ENCODE measurements at regions of chr17 and their contacts with region 1.

Region 1: DNA sequence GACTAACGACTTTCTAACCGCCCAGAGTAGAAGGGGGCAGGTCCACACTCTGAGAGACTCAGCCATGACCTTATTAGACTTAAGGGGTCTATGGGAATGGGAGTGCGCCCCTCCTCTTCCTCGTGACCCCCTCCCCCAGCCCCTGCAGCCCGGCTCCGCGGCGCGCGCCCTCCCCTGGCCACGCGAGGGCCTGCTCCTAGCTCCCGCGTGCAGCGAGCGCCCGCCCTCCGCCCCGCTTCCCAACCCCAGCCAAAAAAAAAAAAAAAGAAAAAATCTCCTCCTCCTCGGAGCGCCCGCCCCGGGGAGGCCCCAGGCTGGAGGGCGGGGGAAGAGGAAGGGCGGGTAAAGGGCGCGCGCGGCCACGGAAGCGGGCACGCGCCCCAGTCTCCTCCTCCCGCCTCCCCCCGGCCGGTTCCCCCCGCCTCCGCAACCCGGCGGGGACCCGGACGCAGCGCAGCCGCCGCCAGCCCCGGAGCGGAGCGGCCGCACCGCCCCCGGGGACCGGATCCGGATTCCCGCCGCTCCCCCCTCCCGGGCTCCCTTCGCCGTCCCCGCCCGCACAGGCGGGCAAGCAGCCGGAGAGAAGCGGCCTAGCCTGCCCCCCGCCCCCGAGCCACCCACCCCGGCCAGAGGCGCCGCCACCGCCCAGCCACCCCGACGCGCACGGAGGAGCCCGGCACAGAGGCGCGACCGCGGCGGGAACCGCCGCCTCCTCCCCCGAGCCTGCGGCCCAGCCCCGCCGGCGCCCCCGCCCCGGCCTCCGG is 949 bp downstream of the UBTF start:
- DNase-seq: peak; percentile 95
- H3K4me3 ChIP-seq: peak overlapping the region; percentile 70 to 91
- H3K27ac ChIP-seq: peak overlapping the region; percentile 84 to 97
- H3K4me1 ChIP-seq: peaks cover 20 to 25% of the 10 kb centered on the region in 2 experiments
- H3K27me3 ChIP-seq: no peaks in the 10 kb centered on the region
- CTCF ChIP-seq: peak; percentile 75
- EP300 ChIP-seq: no peak; a peak in 1 of 4 replicates
- RAD21 ChIP-seq: peak; percentile 44

Region 2: DNA sequence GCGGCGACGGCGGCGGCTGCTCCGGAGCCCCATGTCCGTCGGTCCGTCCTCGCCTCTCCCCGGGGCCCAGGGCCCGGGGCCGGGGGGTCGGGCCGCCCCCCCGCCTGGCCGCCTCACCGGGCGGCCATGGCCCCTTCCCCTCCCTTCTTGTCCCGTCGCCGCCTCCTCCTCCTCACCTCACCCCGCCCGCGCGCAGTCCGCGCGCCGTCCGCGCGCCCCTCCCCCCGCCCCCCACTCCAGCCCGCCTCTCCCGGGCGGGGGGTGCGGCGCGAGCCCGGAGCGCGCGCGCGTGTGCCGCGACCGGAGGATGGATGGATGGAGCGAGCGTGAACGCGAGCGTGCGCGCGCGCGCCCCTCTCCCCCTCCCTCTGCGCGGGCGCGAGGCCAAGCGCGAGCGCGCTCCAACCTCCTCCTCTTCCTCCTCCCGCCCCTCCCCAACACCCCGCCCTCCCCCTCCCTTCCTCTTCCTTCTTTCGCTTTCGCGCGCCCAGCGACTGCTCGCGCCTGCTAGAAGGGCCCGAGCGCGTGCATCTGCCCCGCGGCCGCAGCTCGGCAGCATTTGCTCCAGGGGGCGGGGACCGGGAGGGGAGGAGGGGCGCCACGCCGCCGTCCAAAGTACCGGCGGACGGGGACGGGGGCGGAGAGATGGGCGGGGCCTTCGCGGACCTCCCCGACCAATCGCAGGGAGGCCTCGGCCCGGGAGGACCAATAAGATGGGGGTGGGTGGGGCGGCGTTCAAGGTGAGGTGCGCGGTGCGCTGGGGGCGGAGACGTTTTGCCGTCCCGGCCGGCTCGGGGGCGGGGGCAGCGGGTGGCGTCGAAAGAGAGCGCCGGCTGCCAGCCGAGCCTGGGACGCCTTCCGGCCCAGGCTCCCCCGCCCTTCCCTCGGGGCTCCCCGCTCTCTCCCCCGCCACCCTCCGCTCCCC is 18.7 kb before region 1 on chr17 and contains the start of gene ATXN7L3:
- CTCF ChIA-PET with region 1: interaction called, 61 read pairs
- POLR2A ChIA-PET with region 1: interaction called, 9 read pairs
- DNase-seq: peak; percentile 99
- H3K4me3 ChIP-seq: peak within 1 kb of the TSS; percentile 79 to 83
- H3K27ac ChIP-seq: peak within 1 kb of the TSS; percentile 85 to 96
- H3K4me1 ChIP-seq: peaks cover 16 to 30% of the 10 kb centered on the region in 2 experiments
- H3K27me3 ChIP-seq: no peaks in the 10 kb centered on the region
- CTCF ChIP-seq: no peak
- EP300 ChIP-seq: no peak
- RAD21 ChIP-seq: no peak
- polyA plus RNA-seq, gene ATXN7L3: 47.7 and 57.9 TPM in 2 replicates

Region 3: DNA sequence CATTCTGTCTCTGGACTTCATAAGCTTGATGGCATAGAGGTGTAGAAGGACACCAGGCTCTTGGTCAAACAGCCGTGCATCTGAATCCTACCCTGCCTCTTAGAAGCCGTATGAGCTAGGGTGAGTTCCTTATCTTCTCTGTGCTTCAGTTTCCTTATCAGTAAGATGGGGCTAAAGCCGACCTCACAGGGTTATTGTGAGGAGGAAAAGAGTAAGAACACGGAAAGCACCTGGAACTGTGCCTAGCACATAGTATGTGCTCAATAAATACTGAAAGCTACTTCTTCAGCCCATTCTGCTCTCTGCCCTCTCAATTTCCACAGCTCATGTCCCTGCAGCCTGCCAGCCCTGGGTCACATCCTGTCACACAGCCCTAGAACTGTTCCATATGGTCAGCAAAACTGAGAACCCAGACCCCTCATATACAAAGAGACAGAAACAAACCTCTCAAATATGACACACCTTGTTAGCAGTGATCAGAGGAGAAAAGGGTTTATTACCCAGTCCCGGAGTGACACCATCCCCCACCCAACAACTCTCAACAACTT is 18.0 kb after region 1 on chr17:
- CTCF ChIA-PET with region 1: no interaction called
- POLR2A ChIA-PET with region 1: no interaction called
- DNase-seq: no peak
- H3K4me3 ChIP-seq: no peak overlapping the region
- H3K27ac ChIP-seq: no peak overlapping the region
- H3K4me1 ChIP-seq: 0 out of 4 replicates have a peak, but pooled peaks cover 0 to 3% of the 10 kb centered on the region in 2 experiments
- H3K27me3 ChIP-seq: no peaks in the 10 kb centered on the region
- CTCF ChIP-seq: no peak
- EP300 ChIP-seq: no peak
- RAD21 ChIP-seq: no peak

Region 4: GRCh38 chr17:44308320-44308818 is 89.8 kb after region 1 on chr17 and contains the start of gene RUNDC3A:
- CTCF ChIA-PET with region 1: interaction called, 37 read pairs
- POLR2A ChIA-PET with region 1: interaction called, 34 read pairs
- DNase-seq: peak; percentile 100
- H3K4me3 ChIP-seq: peak within 1 kb of the TSS; percentile 52 to 60
- H3K27ac ChIP-seq: peak within 1 kb of the TSS; percentile 22 to 92; a peak in 3 of 4 replicates
- H3K4me1 ChIP-seq: peaks cover 0 to 31% of the 10 kb centered on the region in 2 experiments; a peak in 1 of 4 replicates
- H3K27me3 ChIP-seq: no peaks in the 10 kb centered on the region
- CTCF ChIP-seq: no peak
- EP300 ChIP-seq: no peak
- RAD21 ChIP-seq: no peak
- polyA plus RNA-seq, gene RUNDC3A: 8.9 and 11.0 TPM in 2 replicates

Region 5: DNA sequence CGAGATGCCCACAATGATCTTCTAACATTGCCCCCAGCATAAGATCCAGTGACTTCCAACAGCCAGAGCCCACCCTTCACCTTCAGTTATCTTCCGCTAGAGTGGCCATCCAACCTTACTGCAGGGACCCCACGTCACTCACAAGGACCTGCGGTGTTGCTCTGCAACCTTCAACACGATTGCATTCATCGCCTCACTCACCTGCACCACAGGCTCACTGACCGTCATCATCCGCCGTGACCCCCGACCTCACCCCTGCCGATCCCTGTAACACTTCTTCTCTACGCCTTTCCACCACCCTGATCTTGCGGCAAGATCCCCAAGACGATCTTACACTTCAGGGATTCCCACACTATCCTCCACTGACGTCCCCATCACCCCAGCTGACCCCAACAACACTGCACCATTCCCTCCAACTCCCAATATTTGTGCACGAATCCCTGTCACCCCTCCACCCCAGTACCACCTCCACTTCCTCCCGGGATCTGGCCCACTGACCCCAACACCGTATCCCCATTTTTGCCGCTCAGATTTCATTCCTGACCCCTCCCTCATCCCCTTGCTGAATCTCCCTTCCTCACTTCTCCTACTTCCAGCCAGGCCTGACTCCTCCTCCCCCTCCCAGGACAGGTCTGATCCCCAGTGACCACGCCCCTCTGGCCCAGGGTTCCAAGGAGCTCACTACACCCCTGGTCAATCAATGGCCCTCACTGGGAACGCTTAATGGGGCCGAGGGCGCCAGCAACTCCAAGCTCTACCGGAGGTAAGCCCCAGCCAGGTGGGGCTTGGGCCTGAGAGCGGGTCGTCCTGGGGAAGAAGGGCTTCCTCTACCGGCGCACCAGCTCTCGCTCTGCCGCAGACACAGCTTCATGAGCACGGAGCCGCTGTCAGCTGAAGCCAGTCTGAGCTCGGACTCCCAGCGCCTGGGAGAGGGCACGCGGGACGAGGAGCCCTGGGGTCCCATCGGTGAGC is 97.5 kb after region 1 on chr17:
- CTCF ChIA-PET with region 1: interaction called, 37 read pairs
- POLR2A ChIA-PET with region 1: interaction called, 34 read pairs
- DNase-seq: peak; percentile 28
- H3K4me3 ChIP-seq: no peak overlapping the region
- H3K27ac ChIP-seq: no peak overlapping the region
- H3K4me1 ChIP-seq: peaks cover 0 to 5% of the 10 kb centered on the region in 2 experiments; a peak in 1 of 4 replicates
- H3K27me3 ChIP-seq: no peaks in the 10 kb centered on the region
- CTCF ChIP-seq: no peak
- EP300 ChIP-seq: no peak
- RAD21 ChIP-seq: no peak

Region 6: DNA sequence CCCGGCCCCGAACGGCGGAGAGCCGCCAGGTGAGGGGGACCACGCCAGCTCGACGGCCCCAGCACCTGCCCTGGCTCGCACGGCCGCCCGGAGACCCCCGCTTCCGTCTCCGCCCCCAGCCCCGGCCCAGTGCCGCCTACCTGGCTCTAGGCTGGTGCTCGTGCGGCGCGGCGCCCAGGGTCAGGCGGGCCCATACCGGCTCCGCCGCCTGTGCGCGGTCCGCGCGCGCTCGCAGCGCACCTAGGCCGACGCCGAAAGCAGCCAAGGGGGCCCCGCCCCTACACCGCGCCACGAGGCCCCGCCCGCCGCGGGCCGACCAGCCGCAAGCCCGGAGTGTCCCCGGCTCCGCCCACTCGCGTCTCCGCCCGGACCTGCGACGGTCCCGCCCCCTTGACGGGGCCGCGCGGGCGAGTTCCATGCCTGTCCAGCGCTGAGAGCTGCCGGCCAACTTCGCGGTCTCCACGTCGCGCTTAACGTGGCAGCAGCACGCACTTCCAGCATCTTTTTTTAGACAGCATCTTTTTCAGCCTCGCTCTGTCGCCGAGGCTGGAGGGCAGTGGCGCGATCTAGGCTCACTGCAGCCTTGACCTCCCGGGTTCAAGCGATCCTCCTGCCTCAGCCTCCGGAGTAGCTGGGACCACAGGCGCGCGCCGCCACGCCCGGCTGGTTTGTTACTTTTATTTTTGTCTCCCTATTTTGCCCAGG is 106.2 kb after region 1 on chr17 and contains the start of gene SLC25A39:
- CTCF ChIA-PET with region 1: interaction called, 57 read pairs
- POLR2A ChIA-PET with region 1: interaction called, 14 read pairs
- DNase-seq: peak; percentile 98
- H3K4me3 ChIP-seq: peak within 1 kb of the TSS; percentile 95 to 98
- H3K27ac ChIP-seq: peak within 1 kb of the TSS; percentile 48 to 60; a peak in 2 of 4 replicates
- H3K4me1 ChIP-seq: peaks cover 0 to 10% of the 10 kb centered on the region in 2 experiments; a peak in 1 of 4 replicates
- H3K27me3 ChIP-seq: no peaks in the 10 kb centered on the region
- CTCF ChIP-seq: no peak
- EP300 ChIP-seq: no peak
- RAD21 ChIP-seq: peak; percentile 11; the same call in 1 of the 2 replicates
- polyA plus RNA-seq, gene SLC25A39: 106 and 131 TPM in 2 replicates

Region 7: DNA sequence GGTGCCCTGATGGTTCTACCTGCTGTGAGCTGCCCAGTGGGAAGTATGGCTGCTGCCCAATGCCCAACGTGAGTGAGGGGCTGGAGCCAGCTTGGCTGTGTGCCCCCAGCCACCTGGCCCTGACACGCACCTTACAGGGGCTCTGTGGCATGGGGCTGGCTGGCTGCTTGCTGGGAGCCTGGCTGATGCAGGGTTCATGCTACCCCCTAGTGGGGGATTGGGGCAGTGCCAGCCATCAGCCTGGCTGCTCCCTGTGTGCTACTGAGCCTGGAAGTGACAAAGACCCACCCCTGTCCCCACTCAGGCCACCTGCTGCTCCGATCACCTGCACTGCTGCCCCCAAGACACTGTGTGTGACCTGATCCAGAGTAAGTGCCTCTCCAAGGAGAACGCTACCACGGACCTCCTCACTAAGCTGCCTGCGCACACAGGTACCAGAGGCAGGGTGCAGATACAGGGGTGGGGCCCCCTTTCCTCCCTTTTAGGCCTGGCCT is 132.3 kb after region 1 on chr17:
- CTCF ChIA-PET with region 1: interaction called, 20 read pairs
- POLR2A ChIA-PET with region 1: interaction called, 3 read pairs
- DNase-seq: peak; percentile 96
- H3K4me3 ChIP-seq: peak overlapping the region in 1 of 2 experiments; percentile 26; a peak in 1 of 4 replicates
- H3K27ac ChIP-seq: no peak overlapping the region
- H3K4me1 ChIP-seq: peaks cover 0 to 7% of the 10 kb centered on the region in 2 experiments; a peak in 1 of 4 replicates
- H3K27me3 ChIP-seq: no peaks in the 10 kb centered on the region
- CTCF ChIP-seq: peak; percentile 74
- EP300 ChIP-seq: no peak
- RAD21 ChIP-seq: peak; percentile 79

Region 8: GRCh38 chr17:44556832-44557606 is 338.5 kb after region 1 on chr17 and contains the start of gene FZD2:
- CTCF ChIA-PET with region 1: no interaction called
- POLR2A ChIA-PET with region 1: no interaction called
- DNase-seq: peak; percentile 95
- H3K4me3 ChIP-seq: peak within 1 kb of the TSS; percentile 72 to 83
- H3K27ac ChIP-seq: peak within 1 kb of the TSS; percentile 92 to 96
- H3K4me1 ChIP-seq: peaks cover 11 to 41% of the 10 kb centered on the region in 2 experiments; a peak in 3 of 4 replicates
- H3K27me3 ChIP-seq: no peaks in the 10 kb centered on the region
- CTCF ChIP-seq: no peak
- EP300 ChIP-seq: peak in 1 of 2 experiments; percentile 27; a peak in 1 of 4 replicates
- RAD21 ChIP-seq: no peak
- polyA plus RNA-seq, gene FZD2: 28.9 and 35.1 TPM in 2 replicates